A549 (cell line): ENCODE measurements at regions of chr2 and their contacts with region 1.

Region 1: DNA sequence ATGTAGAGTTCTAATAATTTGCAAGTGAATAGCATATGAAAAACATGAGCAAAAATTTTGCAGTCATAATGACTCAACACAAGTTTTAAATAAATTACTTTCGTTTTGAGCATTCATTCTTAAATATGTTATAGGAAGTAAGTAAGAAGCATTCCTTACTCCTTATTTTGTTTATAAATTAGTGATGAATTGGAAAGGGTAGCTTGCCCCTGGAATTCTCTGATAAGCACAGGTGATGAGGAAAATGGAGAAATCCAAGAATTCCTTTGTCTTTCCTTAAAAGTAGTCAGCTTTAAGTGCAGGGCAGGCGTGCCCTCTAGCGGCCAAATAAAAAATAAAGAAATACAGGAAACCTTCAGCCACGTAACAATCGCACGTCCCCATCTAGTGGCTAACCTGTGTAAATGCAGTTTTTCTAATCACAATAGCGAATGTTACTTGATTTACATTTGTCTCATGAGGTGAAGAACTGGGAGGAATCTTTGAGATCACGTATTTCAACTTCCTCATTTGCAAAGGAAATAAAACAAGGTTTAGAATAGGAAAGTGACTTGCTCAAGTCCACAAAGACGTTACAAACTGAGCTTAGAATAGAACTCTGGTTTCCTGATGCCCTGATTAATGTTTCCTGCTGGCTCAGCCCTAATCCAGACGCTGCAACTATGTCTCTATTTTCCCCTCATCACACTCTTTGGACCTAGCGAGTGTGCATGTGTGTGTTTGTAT is 47.2 kb upstream of the ZNG1B start:
- DNase-seq: peak; percentile 14 to 85
- ATAC-seq: peak; percentile 77 to 89
- H3K4me3 ChIP-seq: no peak overlapping the region
- H3K27ac ChIP-seq: peak overlapping the region; percentile 12 to 59; a peak in 4 of 6 replicates
- H3K4me1 ChIP-seq: peaks cover 6% of the 10 kb centered on the region; the same call in 2 of the 3 replicates
- CTCF ChIP-seq: peak; percentile 95
- EP300 ChIP-seq: no peak
- POLR2A ChIP-seq: no peak
- RAD21 ChIP-seq: peak; percentile 74 to 82

Region 2: DNA sequence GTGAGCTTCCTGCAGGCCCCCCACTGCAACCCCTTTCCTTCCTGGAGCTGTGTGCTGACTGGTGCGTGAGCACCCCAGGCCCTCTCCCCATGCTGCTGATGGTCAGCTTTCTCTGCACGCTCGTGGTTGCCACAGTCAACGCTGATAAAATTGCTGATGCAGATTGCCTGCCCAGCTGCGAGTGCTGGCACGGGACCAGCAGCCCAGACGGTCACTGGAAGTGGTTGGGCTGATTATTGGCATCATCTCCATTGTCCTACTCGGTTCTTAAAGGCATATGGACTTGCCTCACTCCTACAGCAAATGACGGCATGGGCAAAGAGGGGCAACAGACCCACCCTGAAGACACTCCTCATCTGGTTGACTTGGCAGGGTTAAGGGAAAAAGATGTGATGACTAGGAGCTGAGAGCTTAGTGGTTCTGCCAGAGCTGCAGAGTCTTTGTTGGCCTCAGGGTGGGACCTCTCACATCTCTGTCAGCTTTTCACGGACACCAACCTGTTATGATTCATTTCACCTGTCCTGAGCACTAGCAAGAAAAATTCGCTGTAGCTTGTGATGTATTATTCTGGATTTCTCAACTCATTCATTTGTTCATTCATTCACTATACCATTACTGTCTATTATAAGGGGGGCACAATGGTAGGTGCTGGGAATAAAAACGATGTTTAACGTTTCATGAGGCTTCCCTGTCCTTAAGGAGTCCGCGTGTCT is 150.0 kb before region 1 on chr2:
- CTCF ChIA-PET with region 1: interaction called, 16 read pairs
- POLR2A ChIA-PET with region 1: no interaction called
- DNase-seq: peak; percentile 74 to 87
- ATAC-seq: peak; percentile 69
- H3K4me3 ChIP-seq: 0 out of 3 replicates have a peak overlapping the region, but pooled peaks have one; percentile 1
- H3K27ac ChIP-seq: peak overlapping the region; percentile 97 to 98
- H3K4me1 ChIP-seq: peaks cover 50% of the 10 kb centered on the region
- CTCF ChIP-seq: no peak
- EP300 ChIP-seq: peak; percentile 14 to 49; a peak in 3 of 5 replicates
- POLR2A ChIP-seq: no peak; the same call in 1 of the 2 replicates
- RAD21 ChIP-seq: no peak

Region 3: GRCh38 chr2:113257516-113258264 is 132.6 kb before region 1 on chr2:
- CTCF ChIA-PET with region 1: interaction called, 13 read pairs
- POLR2A ChIA-PET with region 1: no interaction called
- DNase-seq: no peak
- ATAC-seq: 0 out of 6 replicates have a peak, but pooled peaks of 1 of the 2 experiments have one; percentile 29
- H3K4me3 ChIP-seq: no peak overlapping the region
- H3K27ac ChIP-seq: peak overlapping the region in 1 of 2 experiments; percentile 34; a peak in 2 of 6 replicates
- H3K4me1 ChIP-seq: peaks cover 8% of the 10 kb centered on the region; the same call in 2 of the 3 replicates
- CTCF ChIP-seq: no peak
- EP300 ChIP-seq: no peak
- POLR2A ChIP-seq: no peak
- RAD21 ChIP-seq: no peak

Region 4: DNA sequence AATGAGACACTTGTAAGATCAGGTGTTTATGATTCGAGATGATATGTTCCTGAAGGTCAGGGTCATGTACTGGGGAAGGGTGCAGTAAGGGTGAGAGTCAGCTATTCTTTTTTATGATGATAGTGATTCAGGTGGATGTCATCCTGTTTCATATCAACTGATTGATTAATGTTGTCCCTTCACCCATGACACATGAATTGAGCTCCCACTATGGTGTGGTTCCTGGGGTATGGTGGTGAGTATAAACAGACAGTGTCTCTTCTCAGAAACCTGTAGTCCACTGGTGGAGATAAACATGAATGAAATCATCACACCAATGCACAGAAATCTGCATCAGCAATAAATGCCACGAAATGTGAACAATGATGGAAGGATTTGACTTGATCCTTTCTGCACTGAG is 74.2 kb before region 1 on chr2:
- CTCF ChIA-PET with region 1: no interaction called
- POLR2A ChIA-PET with region 1: no interaction called
- DNase-seq: no peak
- ATAC-seq: no peak
- H3K4me3 ChIP-seq: no peak overlapping the region
- H3K27ac ChIP-seq: peak overlapping the region; percentile 27 to 75; a peak in 4 of 6 replicates
- H3K4me1 ChIP-seq: peaks cover 42% of the 10 kb centered on the region
- CTCF ChIP-seq: no peak
- EP300 ChIP-seq: no peak
- POLR2A ChIP-seq: no peak
- RAD21 ChIP-seq: no peak

Region 5: GRCh38 chr2:113342650-113343049 is 47.6 kb before region 1 on chr2:
- CTCF ChIA-PET with region 1: no interaction called
- POLR2A ChIA-PET with region 1: no interaction called
- DNase-seq: no peak
- ATAC-seq: no peak
- H3K4me3 ChIP-seq: no peak overlapping the region
- H3K27ac ChIP-seq: peak overlapping the region; percentile 5 to 59; a peak in 3 of 6 replicates
- H3K4me1 ChIP-seq: peaks cover 58% of the 10 kb centered on the region
- CTCF ChIP-seq: no peak
- EP300 ChIP-seq: no peak
- POLR2A ChIP-seq: no peak
- RAD21 ChIP-seq: no peak

Region 6: DNA sequence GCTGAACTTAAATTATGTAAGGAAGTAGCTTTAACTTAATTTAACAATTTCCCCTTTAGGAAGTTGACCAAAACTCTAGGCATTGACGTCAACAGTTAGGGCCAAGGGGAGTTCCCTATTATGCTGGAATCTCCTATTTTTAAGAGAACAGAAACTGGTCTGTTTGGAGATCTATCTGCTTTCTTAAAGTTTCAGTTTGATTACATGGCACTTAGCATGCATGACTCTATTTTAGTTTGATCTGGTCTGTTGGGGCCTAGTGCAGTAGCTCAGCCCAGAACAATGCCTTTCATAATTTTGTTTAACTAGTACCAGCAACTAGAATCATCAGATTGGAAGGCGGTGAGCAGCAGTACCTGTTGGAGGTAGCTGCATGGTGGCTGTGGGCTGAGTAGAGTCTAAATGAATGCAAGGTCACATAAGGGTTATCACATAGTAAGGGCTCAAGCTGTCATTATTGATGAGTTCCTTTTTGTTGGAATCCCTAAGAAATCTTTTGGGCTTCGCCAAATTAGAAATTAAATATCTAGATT is 13.3 kb before region 1 on chr2:
- CTCF ChIA-PET with region 1: interaction called, 14 read pairs
- POLR2A ChIA-PET with region 1: no interaction called
- DNase-seq: no peak
- ATAC-seq: no peak
- H3K4me3 ChIP-seq: no peak overlapping the region
- H3K27ac ChIP-seq: no peak overlapping the region
- H3K4me1 ChIP-seq: peaks cover 6% of the 10 kb centered on the region; the same call in 1 of the 3 replicates
- CTCF ChIP-seq: no peak
- EP300 ChIP-seq: no peak
- POLR2A ChIP-seq: no peak
- RAD21 ChIP-seq: no peak